Right ventricle myocardium superior (tissue), 1 donor: ENCODE measurements at regions of chr11 and their contacts with region 1.

Region 1: DNA sequence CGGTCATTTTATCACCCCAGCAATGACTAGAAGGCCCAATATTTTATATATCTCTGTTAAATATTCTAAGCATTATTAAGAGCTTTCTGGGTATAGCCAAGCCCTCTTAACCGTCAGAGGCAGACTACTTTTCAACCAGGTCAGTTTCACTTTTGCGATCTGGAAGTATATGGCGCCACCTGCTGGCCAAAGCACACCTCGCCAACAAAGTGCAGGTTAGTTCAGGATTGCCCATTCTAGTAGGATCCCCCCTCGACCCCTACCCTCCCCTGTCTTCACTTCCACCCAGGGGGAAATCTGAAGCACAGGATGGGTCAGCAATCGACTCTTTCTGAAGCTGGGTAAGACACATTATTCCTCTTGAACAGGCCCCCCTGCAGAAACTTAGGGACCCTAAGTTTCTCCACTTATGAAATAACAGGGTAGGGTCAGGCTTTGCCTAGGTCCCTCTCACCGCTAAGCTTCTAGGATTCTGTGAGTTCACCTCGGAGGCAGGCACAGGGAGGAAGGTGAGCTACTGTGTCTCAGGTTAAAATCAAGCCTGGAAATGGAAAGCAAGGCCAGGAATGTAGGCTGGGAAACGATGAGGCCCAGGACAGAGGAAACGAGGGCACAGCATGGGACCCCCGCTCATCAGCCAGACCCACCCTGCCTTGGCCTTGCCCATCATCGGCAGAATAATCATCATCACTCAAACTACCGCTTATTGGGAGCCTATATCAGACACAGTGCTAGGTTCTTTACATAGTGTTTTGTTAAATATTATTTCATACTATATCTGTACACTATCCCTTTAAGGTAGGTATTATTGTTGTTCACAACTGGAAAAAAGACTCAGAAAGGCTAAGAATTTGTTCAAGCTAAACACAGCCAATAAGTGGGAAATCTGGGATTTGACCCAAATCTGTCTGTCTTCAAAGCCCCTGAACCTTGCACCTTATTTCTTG is 35.6 kb downstream of the KCNJ1 start:
- DNase-seq: peak; percentile 87
- ATAC-seq: peak; percentile 91

Region 2: DNA sequence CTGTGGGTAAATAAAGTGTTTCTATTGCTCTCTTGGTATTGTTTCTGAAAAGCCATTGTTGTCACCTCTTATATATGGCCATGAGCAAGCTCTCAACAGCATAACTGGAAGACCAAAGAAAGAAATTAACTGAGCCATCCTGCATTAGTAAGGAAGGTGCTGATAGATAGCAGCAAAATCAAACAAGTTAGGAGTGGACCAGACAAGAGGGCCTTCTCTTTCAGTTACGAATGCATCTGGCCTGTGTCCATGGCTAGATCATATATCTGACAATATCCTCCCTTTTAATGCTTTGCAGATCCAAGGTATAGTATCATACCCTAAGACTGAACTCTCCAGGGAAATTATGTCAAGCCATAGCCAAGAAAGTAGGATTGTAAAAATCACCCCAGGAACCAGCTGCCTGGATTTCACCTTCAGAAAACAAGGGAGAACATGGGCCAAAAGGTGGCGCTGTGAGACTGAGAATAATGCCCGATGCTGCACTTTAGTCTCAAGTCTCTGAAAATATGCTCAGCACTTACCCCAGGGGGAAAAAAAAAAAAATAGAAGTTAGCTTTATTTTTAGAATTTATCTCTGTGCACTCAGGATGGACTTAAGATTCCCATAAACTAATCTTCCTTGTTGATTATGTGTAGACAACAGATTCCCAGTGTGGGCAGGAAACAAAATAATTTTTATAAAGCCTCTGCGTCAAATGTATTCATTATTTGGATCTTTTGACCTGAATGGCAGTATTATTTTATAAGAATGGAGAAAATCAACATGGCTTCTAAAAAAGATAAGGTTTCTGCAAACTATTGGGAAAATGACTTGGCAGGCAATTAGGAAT is 659.2 kb before region 1 on chr11:
- intact Hi-C with region 1: loop called (anchors 5 kb)
- DNase-seq: peak; percentile 86
- ATAC-seq: peak; percentile 93

Region 3: GRCh38 chr11:128530118-128531074 is 301.1 kb before region 1 on chr11:
- intact Hi-C with region 1: no loop called
- DNase-seq: peak; percentile 58
- ATAC-seq: peak; percentile 84

Region 4: DNA sequence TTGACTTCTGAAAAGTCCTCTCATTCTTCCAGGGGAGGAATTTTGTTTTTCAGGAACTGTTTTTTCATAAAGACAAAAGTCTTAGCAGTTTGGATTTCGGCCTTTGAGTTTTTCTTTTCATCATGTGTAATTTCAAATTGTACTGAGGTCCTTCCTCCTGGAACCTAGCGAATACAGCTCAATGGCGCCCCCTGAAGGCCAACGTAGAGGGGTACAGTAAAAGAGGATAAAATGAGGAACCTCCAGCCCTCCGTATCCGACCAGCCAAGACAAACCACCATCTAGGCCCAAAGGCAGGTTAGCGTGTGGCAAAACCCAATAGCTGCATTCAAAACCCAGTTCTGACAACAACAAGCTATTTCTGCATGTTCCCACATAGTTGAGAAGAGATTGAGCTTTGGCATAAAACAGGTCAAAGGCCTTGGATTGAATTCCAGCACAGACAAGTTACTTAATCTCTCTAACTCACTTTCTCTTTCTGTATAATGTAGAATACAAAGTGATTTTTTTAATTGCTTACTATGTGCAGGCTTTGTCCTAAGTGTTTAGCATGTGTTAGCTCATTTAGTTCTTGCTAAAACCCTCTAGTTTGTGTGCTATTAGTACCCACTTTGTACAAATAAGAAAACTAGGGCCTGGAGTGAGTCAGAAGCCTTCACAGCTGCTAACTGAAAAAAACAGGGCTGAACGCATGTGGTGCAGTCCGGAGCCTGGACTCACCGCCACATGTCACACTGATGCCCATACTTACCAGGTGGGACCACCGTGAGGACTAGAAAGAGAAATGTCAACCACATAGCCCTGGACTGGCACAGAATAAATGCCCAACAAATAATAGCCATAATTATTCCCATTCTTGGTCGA is 200.8 kb before region 1 on chr11:
- intact Hi-C with region 1: loop called (anchors 5 kb)
- DNase-seq: peak; percentile 89
- ATAC-seq: peak; percentile 97